IMR-90 (cell line): ENCODE measurements at regions of chr1 and their contacts with region 1.

Region 1: GRCh38 chr1:182974506-182975191 is 21.7 kb upstream of the SHCBP1L start:
- DNase-seq: no peak
- ATAC-seq: peak; percentile 63
- H3K4me3 ChIP-seq: no peak overlapping the region
- H3K27ac ChIP-seq: no peak overlapping the region
- H3K4me1 ChIP-seq: peaks cover 7% of the 10 kb centered on the region
- H3K27me3 ChIP-seq: no peaks in the 10 kb centered on the region
- CTCF ChIP-seq: no peak
- POLR2A ChIP-seq: no peak
- RAD21 ChIP-seq: no peak

Region 2: GRCh38 chr1:183124259-183124658 is 149.6 kb after region 1 on chr1:
- CTCF ChIA-PET with region 1: no interaction called
- POLR2A ChIA-PET with region 1: no interaction called
- dilution Hi-C with region 1: no loop called
- in situ Hi-C with region 1: loop called (anchors 25 kb)
- intact Hi-C with region 1: loop called (anchors 5 kb)
- DNase-seq: no peak
- ATAC-seq: no peak
- H3K4me3 ChIP-seq: no peak overlapping the region
- H3K27ac ChIP-seq: no peak overlapping the region
- H3K4me1 ChIP-seq: peaks cover 10% of the 10 kb centered on the region
- H3K27me3 ChIP-seq: no peaks in the 10 kb centered on the region
- CTCF ChIP-seq: no peak
- POLR2A ChIP-seq: no peak
- RAD21 ChIP-seq: no peak